ENCODE measurements at regions of chr10 and their contacts with region 1.

Region 1: GRCh38 chr10:29735596-29736318 is 101.0 kb upstream of the SVIL start:
- DNase-seq: peak; percentile 87
- ATAC-seq: peak; percentile 91

Region 2: DNA sequence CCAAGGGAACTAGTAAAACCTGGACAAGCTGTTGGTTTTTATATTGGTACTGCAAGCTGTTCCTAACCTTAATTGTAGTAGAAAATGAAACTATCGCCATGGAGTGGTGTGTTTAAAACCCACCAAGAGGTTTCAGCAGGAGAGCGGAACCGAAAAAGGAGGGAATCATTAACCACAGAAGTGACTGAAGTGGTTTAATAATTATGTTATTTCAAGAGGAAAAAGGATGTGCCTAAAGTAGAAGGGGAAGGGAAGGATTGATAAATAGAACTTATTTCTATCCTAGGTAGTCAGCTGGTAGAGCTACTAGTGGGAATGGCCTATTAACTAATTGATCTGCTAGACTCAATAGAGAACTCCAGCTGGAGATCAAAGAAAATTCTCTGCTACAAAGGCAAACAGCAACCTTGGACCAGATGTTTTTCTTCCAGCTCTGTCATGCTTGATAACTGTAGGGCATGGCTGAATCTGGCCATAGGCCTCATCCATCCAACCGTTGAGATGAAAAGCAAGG is 966.6 kb before region 1 on chr10:
- intact Hi-C with region 1: no loop called
- DNase-seq: no peak
- ATAC-seq: no peak

Region 3: DNA sequence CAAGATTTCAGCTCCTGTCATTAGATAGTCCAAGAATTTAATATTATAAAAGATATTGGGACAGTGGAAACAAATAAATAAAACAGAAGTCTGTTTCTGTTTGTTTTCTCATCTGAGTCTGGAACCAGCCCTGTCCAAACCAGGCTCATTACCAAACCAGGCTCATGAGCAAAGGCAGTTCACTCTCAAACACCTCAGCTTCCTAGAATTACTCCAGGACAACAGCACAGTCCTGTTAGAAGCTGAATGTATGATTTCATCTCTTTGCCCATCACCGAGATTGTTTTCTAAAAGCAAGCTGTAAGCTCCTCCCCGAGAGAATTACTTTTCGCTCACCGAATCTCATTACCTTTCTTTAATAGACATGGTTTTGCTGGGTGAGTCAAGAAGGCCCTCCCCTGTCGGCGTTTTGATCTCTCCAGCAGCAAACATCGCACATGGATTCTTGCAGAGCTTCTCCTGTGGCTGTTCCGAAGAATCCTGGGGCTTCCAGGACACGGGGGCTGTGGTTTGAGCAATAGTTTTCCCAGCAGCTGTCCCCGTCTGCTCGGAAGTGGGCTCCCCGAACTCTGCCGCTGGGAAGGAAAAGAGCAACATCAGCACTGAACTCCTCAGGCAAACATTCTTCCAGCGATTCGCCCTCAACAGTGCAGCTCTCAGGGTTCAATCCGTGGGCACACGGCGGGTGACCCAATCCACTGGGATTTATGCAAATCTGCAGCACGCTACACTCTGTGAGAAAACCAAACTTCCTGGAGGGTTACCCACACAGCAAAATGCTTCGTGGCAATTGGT is 213.5 kb before region 1 on chr10:
- intact Hi-C with region 1: no loop called
- DNase-seq: no peak
- ATAC-seq: peak in 1 of 2 donors; percentile 32

Region 4: DNA sequence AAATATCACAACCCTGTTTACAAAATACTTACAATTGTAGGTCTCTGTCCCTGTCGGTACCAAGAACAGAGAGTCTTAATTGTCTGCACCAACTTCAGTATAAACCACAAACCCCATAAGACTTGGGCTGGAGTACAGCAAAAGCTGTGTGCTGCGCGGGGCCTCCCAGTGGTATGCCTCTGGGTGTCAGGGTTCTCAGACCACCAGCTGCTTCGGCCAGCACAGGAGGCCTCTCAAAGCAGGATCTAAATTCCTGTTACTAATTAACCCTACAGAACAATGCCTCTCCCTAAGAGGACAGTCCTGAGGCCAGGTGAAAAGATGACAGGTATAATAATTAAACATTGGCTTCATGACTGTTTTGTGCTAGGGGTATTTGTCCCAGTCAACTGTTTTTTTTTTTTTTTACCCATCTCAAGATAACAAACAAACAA is 100.0 kb before region 1 on chr10:
- intact Hi-C with region 1: loop called in 1 of 2 experiments (anchors 10 kb)
- DNase-seq: no peak
- ATAC-seq: peak; percentile 43 to 48

Region 5: GRCh38 chr10:29857843-29858701 is 122.3 kb after region 1 on chr10:
- intact Hi-C with region 1: loop called (anchors 5 kb)
- DNase-seq: peak; percentile 63
- ATAC-seq: peak; percentile 73 to 92

Region 6: DNA sequence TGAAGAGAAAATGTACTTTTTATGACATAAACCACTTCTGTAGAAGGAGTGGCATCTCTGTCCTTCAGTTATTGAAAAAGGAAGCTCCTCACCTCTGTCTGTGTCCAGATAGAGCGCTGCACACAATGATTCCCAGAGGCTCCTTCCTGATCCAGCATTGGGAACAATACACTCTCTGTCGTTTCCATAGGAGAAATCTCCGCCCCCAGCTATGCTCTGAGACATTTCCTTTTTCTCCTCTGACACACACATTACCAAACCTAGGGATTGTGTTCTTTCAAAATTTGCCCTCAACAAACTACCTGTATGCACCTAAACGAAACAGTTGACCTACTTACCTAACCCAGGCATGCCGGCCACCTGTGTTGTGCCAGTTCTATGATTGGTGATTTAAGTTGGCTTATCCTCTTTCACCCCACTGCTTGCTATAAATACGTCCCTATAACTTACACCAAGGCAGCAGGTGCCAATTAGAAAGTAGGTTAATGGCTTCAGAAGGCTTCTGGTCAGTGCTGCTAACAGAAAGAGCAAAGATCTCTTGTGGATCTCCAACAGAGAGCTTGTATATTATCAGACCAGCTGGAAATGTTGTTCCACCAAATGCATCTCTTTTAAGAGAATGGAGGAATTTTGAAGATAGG is 463.7 kb after region 1 on chr10:
- intact Hi-C with region 1: no loop called
- DNase-seq: no peak
- ATAC-seq: no peak

Measured in left cardiac atrium (tissue), 4 donors.